ENCODE measurements at regions of chr5 and their contacts with region 1.

Region 1: DNA sequence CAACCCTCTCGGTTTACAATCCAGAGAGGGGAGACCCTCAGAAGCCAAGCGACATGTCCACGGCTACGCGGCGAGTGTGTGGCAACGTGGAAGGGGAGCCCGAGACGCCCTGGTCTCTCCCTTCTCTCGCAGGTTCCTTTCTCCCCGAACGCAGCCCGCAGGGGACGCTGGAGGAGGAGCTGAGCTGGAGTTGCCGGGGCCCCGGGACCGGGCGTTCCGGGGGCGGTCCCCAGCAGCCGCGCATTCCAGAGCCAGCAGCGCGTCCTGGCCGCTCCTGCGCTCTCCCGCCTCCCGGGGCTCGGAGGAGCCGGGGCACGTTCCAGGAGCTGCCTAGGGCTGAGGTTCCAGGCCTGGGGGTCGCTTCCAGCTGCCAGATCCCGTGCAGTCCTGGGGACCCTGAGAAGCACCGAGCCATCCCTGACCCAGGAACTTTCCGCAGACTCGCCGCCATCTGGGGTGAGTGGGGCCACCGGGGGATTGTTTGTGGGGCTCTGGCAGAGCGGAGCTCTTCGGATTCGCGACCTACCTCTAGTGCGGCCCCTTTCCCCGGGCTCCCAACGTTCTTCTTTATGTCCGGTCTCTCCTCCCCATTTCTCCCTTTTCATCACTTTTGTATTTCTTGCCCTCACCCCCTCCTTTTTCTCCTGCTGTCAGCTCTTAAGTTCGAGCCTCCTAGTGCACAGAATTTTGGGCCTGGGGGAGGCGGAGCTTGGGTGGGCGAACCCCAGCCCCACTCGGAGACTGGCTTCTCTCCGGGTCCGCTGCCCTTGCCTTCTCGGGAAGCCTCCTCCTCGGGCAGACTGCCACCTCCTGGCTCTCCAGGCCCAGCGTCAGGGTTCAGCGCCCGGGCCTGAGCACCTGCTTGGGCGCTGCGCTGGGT is at the start of gene SMIM3:
- DNase-seq: peak in 1 of 2 donors; percentile 62
- ATAC-seq: peak; percentile 42 to 52
- H3K4me3 ChIP-seq: peak within 1 kb of the TSS; percentile 72 to 91 (median 78)
- H3K27ac ChIP-seq: peak within 1 kb of the TSS; percentile 81 to 87 (median 84)
- H3K4me1 ChIP-seq: peaks cover 21 to 27% of the 10 kb centered on the region in 2 donors
- H3K27me3 ChIP-seq: no peaks in the 10 kb centered on the region
- CTCF ChIP-seq: no peak
- POLR2A ChIP-seq: peak; percentile 54 to 78
- total RNA-seq, gene SMIM3: 14.2 to 17.9 (median 15.4) TPM

Region 2: GRCh38 chr5:150217873-150218692 is 560.7 kb before region 1 on chr5:
- in situ Hi-C with region 1: no loop called
- intact Hi-C with region 1: no loop called
- DNase-seq: peak; percentile 65 to 82
- ATAC-seq: peak; percentile 83 to 88
- H3K4me3 ChIP-seq: no peak overlapping the region
- H3K27ac ChIP-seq: no peak overlapping the region
- H3K4me1 ChIP-seq: peaks cover 0 to 7% of the 10 kb centered on the region in 2 donors
- H3K27me3 ChIP-seq: no peaks in the 10 kb centered on the region
- CTCF ChIP-seq: peak; percentile 90 to 97 (median 93)
- POLR2A ChIP-seq: no peak

Region 3: DNA sequence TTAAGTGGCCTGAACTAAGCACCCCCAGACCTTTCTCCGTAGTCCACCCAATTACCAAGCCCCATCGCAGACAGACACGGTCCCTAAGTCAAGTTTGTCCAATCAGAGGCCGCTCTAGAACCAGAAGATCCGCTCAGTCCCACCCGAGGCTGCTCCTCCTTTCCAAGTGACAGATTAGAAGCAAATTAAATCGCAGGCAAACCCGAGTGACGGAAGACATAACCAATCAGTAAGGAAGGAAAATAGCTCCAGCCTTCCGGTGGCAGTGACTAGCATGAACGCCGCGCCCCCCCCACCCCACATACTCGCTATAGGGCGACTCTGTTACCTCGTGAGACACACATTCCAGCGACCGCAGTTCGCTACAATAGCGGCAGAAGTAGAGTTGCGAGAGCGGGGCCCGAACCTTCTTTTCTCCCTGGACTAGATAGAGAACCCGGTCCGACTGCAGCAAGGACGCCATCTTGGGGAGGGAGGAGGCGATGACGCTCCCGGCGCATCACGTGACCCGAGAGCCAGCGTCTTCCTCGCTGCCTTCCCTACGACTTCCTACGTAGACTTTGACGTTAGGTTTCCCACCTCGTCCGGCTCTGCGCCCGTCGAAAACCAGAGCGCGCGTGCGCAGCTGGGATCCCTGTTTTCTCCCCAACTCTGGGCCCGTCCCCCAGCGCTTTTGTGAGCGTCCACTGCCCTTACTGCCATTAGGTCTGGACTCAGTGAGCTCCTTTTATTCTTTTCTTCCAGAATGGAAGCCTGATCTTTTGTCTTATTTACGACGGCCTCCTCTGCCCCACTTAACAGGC is 20.0 kb before region 1 on chr5 and contains the start of gene DCTN4:
- in situ Hi-C with region 1: no loop called
- intact Hi-C with region 1: loop called (anchors 2 kb)
- DNase-seq: peak; percentile 97 to 98
- ATAC-seq: peak; percentile 95 to 98
- H3K4me3 ChIP-seq: peak within 1 kb of the TSS; percentile 68 to 75 (median 71)
- H3K27ac ChIP-seq: peak within 1 kb of the TSS; percentile 95 to 97 (median 96)
- H3K4me1 ChIP-seq: peaks cover 16 to 30% of the 10 kb centered on the region in 2 donors
- H3K27me3 ChIP-seq: no peaks in the 10 kb centered on the region
- CTCF ChIP-seq: peak in 2 of 5 experiments; percentile 35 to 56
- POLR2A ChIP-seq: peak; percentile 48 to 71
- total RNA-seq, gene DCTN4: 66.6 to 92.6 (median 72.8) TPM

Region 4: DNA sequence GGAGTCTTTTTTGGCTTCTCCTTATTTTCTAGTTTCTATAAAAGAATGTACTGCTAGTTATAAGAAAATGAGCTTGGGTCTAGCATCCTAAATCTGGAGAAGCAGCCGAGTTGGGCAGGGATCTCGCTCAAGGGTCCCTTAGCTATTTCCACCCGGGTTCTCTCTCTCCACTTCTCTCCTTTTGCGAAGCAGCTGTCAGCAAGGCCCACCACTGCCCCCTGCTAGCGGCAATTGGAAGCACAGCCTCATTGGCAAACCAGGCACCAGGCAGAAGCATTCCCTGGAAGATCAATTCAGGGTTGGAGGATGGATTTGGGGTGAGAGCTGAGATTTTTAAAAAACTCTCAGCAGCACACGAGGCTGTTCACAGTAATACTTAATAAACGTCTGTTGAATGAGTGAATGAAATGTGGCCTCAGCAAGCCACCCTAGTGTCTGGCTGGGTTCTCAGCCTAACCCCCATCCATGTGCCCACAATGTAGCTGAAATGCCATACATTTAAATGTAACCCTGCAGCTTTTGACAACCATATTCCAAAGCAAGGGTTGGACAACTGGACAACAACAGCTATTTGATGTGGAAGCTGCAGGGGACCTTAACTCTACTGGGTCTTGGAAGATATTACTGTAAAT is 336.6 kb after region 1 on chr5:
- in situ Hi-C with region 1: no loop called
- intact Hi-C with region 1: loop called (anchors 10 kb)
- DNase-seq: peak; percentile 50 to 71
- ATAC-seq: peak; percentile 54 to 59
- H3K4me3 ChIP-seq: no peak overlapping the region
- H3K27ac ChIP-seq: peak overlapping the region; percentile 10 to 32 (median 28)
- H3K4me1 ChIP-seq: peaks cover 15 to 20% of the 10 kb centered on the region in 2 donors
- H3K27me3 ChIP-seq: no peaks in the 10 kb centered on the region
- CTCF ChIP-seq: peak; percentile 95 to 99 (median 96)
- POLR2A ChIP-seq: no peak

Measured in gastrocnemius medialis (tissue), 4 donors.